Calu3 (cell line): ENCODE measurements at regions of chr6 and their contacts with region 1.

Region 1: DNA sequence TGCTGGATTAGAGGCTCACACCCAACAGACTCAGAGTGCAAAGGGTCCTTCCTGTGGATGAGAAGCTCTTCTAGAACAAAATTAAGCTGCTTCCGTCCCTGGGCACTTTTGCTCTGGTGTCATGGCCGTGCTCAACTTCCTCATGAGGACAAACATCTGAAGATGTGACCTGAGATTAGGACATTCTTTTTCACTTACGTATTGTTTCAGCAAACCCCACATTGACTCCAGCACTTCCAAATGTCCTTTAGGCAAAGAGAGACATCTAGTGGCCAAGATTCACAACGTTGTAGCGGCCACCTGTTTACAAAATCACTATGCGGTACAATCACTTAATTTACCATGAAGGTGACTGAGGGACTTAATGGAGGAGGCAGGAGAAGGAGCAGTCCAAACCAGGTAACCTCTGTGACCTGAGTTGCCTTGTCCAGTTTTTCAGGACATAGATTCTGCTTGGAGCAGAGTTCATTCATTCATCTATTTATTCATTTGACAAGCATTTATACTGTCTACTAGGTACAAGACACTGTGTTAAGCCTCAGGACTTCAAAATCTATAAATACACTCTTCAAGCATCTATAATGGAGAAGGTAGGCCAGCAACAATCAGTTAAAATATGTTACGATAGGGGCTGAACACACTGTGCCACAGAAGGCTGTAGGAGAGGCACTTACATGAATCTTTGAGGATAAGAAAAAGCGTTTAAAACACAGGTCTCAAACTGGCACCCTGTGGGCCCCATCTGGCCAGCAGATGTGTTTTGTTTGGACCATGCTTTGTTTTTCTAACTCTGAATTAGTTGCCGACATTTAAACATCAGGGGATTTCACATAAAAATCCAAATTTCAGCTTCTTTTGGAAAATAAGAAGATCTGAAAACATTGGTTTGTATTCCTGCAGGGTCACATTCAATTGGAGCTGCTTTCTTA is 5.6 kb upstream of the ADGRF1 start:
- DNase-seq: peak; percentile 74
- H3K4me3 Mint-ChIP-seq: peak overlapping the region; percentile 9
- H3K27ac Mint-ChIP-seq: peak overlapping the region; percentile 81
- H3K4me1 Mint-ChIP-seq: peaks cover 54% of the 10 kb centered on the region
- H3K27me3 Mint-ChIP-seq: no peaks in the 10 kb centered on the region
- CTCF ChIP-seq: peak; percentile 43

Region 2: GRCh38 chr6:46832816-46833215 is 214.9 kb before region 1 on chr6:
- CTCF ChIA-PET with region 1: no interaction called
- intact Hi-C with region 1: no loop called
- DNase-seq: no peak
- H3K4me3 Mint-ChIP-seq: no peak overlapping the region
- H3K27ac Mint-ChIP-seq: no peak overlapping the region
- H3K4me1 Mint-ChIP-seq: no peaks in the 10 kb centered on the region
- H3K27me3 Mint-ChIP-seq: no peaks in the 10 kb centered on the region
- CTCF ChIP-seq: no peak

Region 3: GRCh38 chr6:46848684-46849360 is 198.9 kb before region 1 on chr6:
- CTCF ChIA-PET with region 1: interaction called, 3 read pairs
- intact Hi-C with region 1: loop called (anchors 5 kb)
- DNase-seq: peak; percentile 94
- H3K4me3 Mint-ChIP-seq: peak overlapping the region; percentile 53
- H3K27ac Mint-ChIP-seq: peak overlapping the region; percentile 9
- H3K4me1 Mint-ChIP-seq: peaks cover 35% of the 10 kb centered on the region
- H3K27me3 Mint-ChIP-seq: no peaks in the 10 kb centered on the region
- CTCF ChIP-seq: peak; percentile 97

Region 4: GRCh38 chr6:47000842-47001241 is 46.9 kb before region 1 on chr6:
- CTCF ChIA-PET with region 1: interaction called, 3 read pairs
- intact Hi-C with region 1: loop called (anchors 2 kb)
- DNase-seq: peak; percentile 75
- H3K4me3 Mint-ChIP-seq: no peak overlapping the region
- H3K27ac Mint-ChIP-seq: no peak overlapping the region
- H3K4me1 Mint-ChIP-seq: peaks cover 64% of the 10 kb centered on the region
- H3K27me3 Mint-ChIP-seq: no peaks in the 10 kb centered on the region
- CTCF ChIP-seq: no peak

Region 5: DNA sequence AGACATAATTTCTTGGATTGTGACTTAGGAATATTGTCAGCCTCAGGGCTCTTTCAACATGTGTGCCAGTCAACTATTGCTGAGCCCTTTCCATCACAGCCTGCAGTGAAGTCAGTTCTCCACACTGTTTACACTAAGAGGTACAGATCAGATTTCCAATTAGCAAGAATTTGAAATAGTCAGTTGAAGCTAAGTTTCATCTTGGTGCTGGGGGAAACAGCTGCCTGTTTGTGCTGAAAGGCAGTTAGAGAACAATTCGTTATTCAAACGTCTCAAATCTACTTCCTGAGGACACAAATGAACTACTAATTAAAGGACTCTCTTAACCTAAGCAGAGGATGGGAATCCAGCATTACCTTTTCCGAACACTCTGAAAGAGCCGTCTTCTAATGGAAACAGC is 31.5 kb before region 1 on chr6:
- CTCF ChIA-PET with region 1: no interaction called
- intact Hi-C with region 1: no loop called
- DNase-seq: no peak
- H3K4me3 Mint-ChIP-seq: no peak overlapping the region
- H3K27ac Mint-ChIP-seq: peak overlapping the region; percentile 25
- H3K4me1 Mint-ChIP-seq: peaks cover 17% of the 10 kb centered on the region
- H3K27me3 Mint-ChIP-seq: no peaks in the 10 kb centered on the region
- CTCF ChIP-seq: no peak

Region 6: DNA sequence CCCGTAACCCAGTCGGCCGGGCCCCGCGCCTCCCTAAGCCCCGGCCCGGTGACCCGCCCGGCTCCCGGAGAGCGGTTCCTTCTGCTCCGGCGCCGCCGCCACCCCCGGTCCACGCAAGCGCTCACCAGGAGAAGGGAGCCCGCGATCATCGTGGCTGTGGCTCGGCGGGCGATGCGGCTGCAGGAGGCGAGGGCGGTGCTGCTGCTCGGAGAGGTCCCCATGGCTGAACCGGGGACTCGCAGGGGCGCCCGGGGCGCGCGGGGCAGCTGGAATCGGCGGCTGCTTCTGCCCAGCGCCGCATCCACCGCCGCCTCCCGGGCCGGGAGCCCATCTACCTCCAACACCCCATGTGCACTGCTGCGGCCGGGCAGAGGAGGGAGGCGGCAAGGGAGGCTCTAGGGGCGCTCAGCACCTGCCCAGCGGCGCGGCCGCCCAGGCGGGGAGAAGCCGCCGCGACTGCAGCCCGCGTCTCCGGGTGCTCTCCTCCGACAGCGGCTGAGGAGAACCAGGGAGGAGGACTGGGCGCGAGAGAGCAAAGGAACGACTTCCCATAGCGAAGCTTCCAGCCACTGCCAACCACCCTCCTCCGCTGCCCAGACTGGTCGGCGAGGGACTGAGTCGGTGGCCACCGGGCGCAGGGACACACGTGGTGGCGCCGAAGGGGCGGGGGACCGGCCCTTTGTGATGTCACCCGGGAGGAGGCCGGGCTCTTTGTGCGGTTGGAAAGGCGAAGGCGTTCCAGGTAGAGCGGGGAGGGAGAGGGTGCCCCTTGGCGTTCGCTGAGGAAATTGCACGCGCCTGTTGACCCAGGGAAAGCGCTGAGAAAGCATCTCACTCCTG is 261.8 kb after region 1 on chr6 and contains the start of gene TNFRSF21:
- CTCF ChIA-PET with region 1: no interaction called
- intact Hi-C with region 1: loop called (anchors 2 kb)
- DNase-seq: peak; percentile 97
- H3K4me3 Mint-ChIP-seq: peak within 1 kb of the TSS; percentile 98
- H3K27ac Mint-ChIP-seq: peak within 1 kb of the TSS; percentile 96
- H3K4me1 Mint-ChIP-seq: peaks cover 31% of the 10 kb centered on the region
- H3K27me3 Mint-ChIP-seq: no peaks in the 10 kb centered on the region
- CTCF ChIP-seq: peak; percentile 85
- total RNA-seq, gene TNFRSF21: 255 and 282 TPM in 2 replicates